ENCODE measurements at regions of chr7 and their contacts with region 1.

Region 1: GRCh38 chr7:94301024-94301586 is 93.6 kb upstream of the COL1A2 start:
- DNase-seq: peak; percentile 71 to 83 (median 81)
- ATAC-seq: peak; percentile 74 to 91 (median 86)
- H3K4me3 ChIP-seq: no peak overlapping the region
- H3K27ac ChIP-seq: peak overlapping the region; percentile 6 to 87 (median 65)
- H3K4me1 ChIP-seq: peaks cover 0 to 52% (median 16%) of the 10 kb centered on the region in 12 donors
- H3K27me3 ChIP-seq: no peaks in the 10 kb centered on the region
- CTCF ChIP-seq: peak in 2 of 12 donors; percentile 11 to 18
- POLR2A ChIP-seq: peak in 1 of 2 donors; percentile 20

Region 2: DNA sequence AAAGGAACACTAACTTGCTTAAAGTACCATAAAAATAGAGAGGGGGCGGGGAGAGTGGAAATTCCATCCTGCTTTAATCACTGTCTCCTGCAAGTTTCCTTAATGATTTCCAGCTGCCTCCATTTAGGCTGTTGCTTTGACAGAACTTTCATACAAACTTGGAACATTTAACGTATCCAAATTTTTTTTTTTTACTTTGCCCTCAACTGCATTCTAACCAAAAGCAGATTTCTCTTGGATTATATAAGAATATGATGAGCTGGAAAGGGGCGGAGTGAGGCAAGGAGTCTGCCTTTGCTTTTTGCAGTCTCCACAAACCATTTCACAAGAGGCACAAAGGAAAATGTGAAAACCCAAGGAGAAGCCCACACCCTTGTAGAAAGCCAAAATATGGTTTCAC is 47.0 kb after region 1 on chr7:
- intact Hi-C with region 1: loop called in 1 of 10 experiments (anchors 5 kb)
- DNase-seq: peak in 4 of 5 donors; percentile 39 to 43 (median 42)
- ATAC-seq: peak; percentile 71 to 92 (median 80)
- H3K4me3 ChIP-seq: peak overlapping the region in 2 of 12 donors; percentile 6 to 29
- H3K27ac ChIP-seq: peak overlapping the region in 10 of 12 donors; percentile 3 to 76 (median 63)
- H3K4me1 ChIP-seq: peaks cover 0 to 19% (median 0%) of the 10 kb centered on the region in 12 donors
- H3K27me3 ChIP-seq: no peaks in the 10 kb centered on the region
- CTCF ChIP-seq: no peak
- POLR2A ChIP-seq: no peak

Region 3: DNA sequence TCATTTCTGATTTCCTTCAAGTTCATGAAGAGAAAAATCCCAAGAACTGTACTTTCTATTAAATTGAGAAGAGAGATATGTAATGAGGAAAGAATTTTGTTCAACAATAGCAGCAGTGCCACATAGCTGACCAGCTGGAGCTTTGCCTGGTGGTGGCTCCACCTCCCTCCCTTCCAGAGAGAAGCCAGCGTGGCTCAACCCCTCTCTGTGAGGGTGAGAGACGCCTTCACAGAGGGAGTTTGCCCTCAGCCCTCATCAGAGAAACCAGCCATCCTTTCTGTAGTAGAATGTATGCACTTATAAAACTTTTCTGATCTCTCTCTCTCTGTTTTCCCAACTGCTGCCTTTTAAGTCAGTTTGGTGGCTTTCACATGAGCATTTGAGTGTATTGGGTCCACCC is 73.1 kb after region 1 on chr7:
- intact Hi-C with region 1: loop called in 5 of 10 experiments (anchors 1 to 10 kb)
- DNase-seq: peak; percentile 71 to 80 (median 75)
- ATAC-seq: peak; percentile 67 to 92 (median 90)
- H3K4me3 ChIP-seq: peak overlapping the region in 8 of 12 donors; percentile 11 to 47 (median 28)
- H3K27ac ChIP-seq: peak overlapping the region; percentile 72 to 99 (median 84)
- H3K4me1 ChIP-seq: peaks cover 0 to 28% (median 4%) of the 10 kb centered on the region in 12 donors
- H3K27me3 ChIP-seq: no peaks in the 10 kb centered on the region
- CTCF ChIP-seq: no peak
- POLR2A ChIP-seq: peak in 1 of 2 donors; percentile 33

Region 4: GRCh38 chr7:94395141-94396036 is 94.3 kb after region 1 on chr7:
- intact Hi-C with region 1: loop called in 7 of 10 experiments (anchors 1 to 10 kb)
- DNase-seq: peak in 3 of 5 donors; percentile 41 to 48 (median 41)
- ATAC-seq: peak; percentile 56 to 78 (median 70)
- H3K4me3 ChIP-seq: peak overlapping the region; percentile 26 to 68 (median 61)
- H3K27ac ChIP-seq: peak overlapping the region; percentile 68 to 92 (median 84)
- H3K4me1 ChIP-seq: peaks cover 0 to 35% (median 10%) of the 10 kb centered on the region in 12 donors
- H3K27me3 ChIP-seq: peaks cover 0 to 11% (median 2%) of the 10 kb centered on the region in 9 donors
- CTCF ChIP-seq: peak; percentile 58 to 85 (median 74)
- POLR2A ChIP-seq: no peak

Measured in heart left ventricle (tissue), 16 donors.